Adrenal gland (tissue), 19 donors: ENCODE measurements at regions of chr1 and their contacts with region 1.

Region 1: GRCh38 chr1:24822887-24823286 is 77.6 kb downstream of the CLIC4 start:
- DNase-seq: no peak
- H3K4me3 ChIP-seq: no peak overlapping the region
- H3K27ac ChIP-seq: no peak overlapping the region
- H3K4me1 ChIP-seq: peaks cover 0 to 20% of the 10 kb centered on the region in 2 donors
- H3K27me3 ChIP-seq: no peaks in the 10 kb centered on the region
- CTCF ChIP-seq: no peak
- POLR2A ChIP-seq: no peak

Region 2: GRCh38 chr1:24754229-24754628 is 68.7 kb before region 1 on chr1:
- intact Hi-C with region 1: loop called in 1 of 2 experiments (anchors 5 kb)
- DNase-seq: no peak
- H3K4me3 ChIP-seq: no peak overlapping the region
- H3K27ac ChIP-seq: peak overlapping the region in 1 of 5 donors; percentile 11
- H3K4me1 ChIP-seq: no peaks in the 10 kb centered on the region
- H3K27me3 ChIP-seq: no peaks in the 10 kb centered on the region
- CTCF ChIP-seq: no peak
- POLR2A ChIP-seq: no peak

Region 3: DNA sequence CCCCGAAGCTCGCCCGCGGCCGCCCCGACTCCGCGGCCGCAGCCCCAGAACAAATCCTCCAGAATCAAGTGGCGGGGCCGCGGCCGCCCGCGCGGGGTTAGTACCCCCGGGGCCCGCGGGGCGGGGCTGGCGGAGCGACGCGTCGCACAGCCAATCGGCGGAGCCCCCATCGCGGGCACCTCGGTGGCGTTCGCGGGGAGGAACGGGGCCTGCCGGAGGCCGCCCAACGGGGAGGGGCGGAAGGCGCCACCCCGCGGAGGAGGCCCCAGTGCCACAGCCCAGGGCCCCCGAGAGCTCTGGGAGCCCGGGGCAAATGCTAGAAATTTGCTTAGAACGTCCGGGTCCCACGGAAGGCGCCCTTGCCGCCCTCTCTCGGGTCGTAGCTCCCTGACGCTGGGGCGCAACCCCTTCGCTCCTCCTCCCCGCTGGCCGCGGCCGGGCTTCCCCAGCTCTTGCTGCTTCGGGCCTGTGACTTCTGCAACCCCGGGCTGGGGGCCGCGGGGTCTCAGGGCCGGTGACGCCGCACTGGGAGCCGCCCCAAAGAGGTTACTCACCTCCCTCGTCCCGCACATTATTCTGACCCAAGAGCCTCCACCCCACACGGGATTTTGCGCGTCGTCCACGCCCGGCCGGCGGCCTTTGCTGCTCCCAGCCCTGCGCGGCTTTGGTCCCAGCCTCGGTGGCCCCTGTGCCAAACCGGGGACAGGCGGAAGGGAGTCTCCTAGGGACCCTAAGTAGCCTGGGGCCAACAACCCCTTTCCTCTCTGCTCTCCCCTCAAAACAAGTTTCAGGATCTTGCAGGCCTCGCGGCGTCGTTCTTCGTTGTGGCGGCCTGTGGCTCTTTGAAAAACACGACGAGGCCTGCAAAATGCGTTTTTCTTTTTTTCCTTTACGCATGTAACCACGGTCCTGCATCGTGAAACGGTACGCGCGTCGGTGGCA is 107.6 kb after region 1 on chr1 and contains the start of gene RUNX3:
- intact Hi-C with region 1: no loop called
- DNase-seq: peak in 5 of 7 donors; percentile 40 to 57 (median 50)
- H3K4me3 ChIP-seq: peak within 1 kb of the TSS in 1 of 4 donors; percentile 43
- H3K27ac ChIP-seq: peak within 1 kb of the TSS in 3 of 5 donors; percentile 22 to 71 (median 57)
- H3K4me1 ChIP-seq: peaks cover 6 to 19% of the 10 kb centered on the region in 2 donors
- H3K27me3 ChIP-seq: peaks cover 81% of the 10 kb centered on the region
- CTCF ChIP-seq: no peak
- POLR2A ChIP-seq: no peak
- total RNA-seq, gene RUNX3: 0.06 to 7.5 (median 3.3) TPM